ENCODE measurements at regions of chr15 and their contacts with region 1.

Region 1: DNA sequence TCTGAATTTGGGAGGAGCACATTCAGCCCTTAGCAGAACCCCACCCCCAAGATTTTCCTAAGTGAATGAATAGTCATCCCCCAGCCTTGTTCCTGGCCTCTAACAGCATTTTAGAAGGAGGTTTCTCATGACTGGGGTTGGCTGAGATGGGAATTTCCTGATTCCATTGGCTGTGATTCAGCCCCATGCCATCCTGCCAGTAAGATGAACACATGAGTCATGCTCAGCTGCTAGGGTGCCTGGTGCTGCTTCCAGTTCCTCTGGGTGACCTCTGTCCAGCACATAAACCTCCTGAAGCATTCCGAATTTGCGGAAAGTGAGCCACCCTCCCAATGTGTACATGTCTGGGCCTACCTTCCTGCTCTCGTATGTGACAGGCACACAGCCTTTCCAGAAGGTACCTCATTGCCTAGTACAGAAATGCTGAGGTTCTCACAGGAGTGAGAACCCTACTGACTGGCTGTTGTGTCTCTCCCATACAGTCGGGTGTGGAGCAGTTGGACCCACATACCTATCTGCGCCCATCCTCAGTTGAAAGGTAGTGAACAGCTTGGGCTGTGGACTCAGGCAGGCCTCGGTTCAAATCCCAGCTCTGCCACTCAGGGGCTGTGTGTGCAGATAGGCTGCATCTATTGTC is 91.7 kb downstream of the APBA2 start:
- DNase-seq: peak; percentile 70

Region 2: DNA sequence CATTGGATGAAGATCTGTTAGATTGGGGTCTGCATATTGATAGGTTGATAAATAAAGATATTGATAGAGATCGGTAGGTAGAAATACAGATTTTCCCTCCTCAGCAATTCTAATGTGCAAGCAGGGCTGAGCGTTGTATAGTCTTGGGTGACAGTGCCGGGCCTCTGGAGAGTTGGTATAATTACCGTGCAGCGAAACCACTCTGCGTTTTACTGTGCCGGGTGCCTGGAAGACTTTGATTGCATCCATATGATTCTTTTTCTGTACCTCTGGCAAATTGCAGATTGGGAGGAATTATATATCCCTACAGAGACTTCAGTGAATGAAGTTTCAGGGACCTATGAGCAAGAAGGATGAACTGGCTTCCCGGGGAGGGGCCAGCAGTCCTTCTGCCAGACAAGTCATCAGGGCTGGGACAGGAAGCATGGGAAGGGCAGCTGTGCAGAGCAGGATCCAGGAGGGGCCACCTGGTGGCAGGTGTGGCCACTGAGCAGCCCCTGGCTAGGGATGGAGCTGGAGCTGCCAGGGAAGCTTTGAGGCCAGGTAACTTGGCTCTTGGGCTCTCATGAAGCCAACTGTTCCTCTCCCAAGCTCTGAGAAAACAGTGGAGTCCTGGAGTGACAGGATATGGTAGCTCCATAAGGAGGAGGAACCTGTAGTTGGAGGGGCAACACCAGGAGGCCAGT is 40.8 kb after region 1 on chr15:
- intact Hi-C with region 1: loop called in 1 of 2 experiments (anchors 1 kb)
- DNase-seq: peak; percentile 62

Region 3: DNA sequence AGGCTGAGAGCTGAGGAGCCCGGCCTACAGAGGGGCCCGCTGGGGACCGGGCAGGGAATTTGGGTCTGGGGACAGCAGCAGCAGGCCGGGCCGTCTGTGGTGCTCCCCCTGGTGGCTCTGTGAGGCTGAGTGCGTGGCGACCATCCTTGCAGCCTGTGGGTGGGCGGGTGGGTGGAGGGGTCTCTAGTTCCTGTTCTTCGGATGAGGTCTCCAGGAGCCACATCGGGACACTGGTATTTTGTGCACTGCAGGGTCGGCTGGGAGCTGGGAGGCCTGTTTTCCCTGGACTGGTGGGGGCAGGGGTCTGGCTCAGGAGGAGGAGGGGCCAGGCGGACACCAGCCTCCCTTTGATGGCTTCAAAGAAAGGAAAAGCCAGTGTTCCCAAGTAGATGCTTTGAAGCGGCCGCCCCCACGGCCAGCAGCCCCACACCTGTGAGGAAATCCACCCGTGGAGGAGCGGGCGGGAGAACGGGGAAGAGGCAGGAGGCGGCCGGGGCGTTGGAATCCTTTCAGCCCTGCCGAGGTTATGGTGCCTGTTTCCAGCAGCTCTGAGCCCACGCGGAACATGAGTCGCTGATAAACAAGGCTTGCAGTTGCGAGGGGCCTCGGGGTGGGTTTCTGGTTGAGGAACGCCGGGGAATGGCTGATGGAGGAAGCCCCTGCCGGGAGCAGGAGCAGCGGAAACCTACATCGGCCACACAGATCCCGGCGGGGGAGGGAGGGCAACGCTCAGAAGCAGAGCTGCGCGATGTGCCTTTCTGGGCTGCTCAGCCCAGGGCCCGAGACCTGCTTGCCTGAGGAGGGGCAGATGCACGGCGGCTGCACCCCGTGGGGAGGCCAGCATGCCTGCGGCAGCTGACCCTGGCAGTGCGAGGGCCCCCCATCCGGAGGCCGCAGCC is 137.8 kb after region 1 on chr15:
- intact Hi-C with region 1: no loop called
- DNase-seq: no peak

Measured in posterior vena cava (tissue), 2 donors.